Ovary (tissue), 10 donors: ENCODE measurements at regions of chr13 and their contacts with region 1.

Region 1: GRCh38 chr13:35978603-35979316 is 152.4 kb downstream of the DCLK1 start:
- DNase-seq: peak in 1 of 5 donors; percentile 63
- H3K4me3 ChIP-seq: no peak overlapping the region
- H3K27ac ChIP-seq: peak overlapping the region; percentile 65 to 77
- H3K4me1 ChIP-seq: peaks cover 2% of the 10 kb centered on the region
- H3K27me3 ChIP-seq: no peaks in the 10 kb centered on the region
- CTCF ChIP-seq: peak; percentile 70 to 87 (median 80)
- EP300 ChIP-seq: no peak
- POLR2A ChIP-seq: no peak

Region 2: DNA sequence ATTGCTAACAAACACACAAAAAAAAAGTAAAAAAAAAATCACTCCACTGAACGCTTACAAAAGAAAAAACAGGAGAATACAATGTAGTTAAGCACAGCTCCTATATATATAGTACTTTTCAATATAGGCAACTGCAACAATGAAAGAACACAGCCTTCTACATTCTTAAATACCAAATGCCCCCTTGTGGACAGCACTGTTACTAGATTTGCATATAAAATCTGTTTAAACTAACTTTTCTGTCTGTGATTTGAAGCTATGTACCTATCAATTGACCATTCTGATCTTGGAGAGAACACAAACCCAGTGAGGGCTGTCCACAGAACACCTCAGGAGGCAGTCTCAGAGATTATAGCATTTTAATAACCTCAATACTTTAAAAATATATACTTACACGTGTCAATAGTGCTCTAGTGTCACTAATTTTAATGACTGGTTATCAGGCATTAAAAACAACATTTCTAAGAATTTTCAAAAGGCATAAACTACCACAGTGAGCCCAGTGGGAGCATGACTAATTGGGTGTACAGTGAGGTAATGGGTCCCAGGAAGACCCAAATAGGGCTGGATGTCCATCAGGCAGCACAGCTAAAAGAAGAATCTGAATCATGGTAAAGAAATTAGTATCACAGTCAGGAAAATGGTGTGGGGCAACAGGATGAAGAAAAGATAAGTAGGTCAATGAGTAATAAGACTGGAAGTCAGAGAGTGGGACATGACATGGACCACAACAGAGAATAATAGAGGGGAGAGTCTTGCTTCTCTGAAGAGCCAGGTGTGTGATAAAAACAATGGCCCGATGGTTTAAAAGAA is 296.6 kb after region 1 on chr13:
- intact Hi-C with region 1: loop called (anchors 2 to 10 kb)
- DNase-seq: peak in 2 of 5 donors; percentile 25 to 49
- H3K4me3 ChIP-seq: no peak overlapping the region
- H3K27ac ChIP-seq: no peak overlapping the region
- H3K4me1 ChIP-seq: no peaks in the 10 kb centered on the region
- H3K27me3 ChIP-seq: no peaks in the 10 kb centered on the region
- CTCF ChIP-seq: peak in 2 of 3 donors; percentile 50 to 53
- EP300 ChIP-seq: no peak
- POLR2A ChIP-seq: no peak